Cardiac septum (tissue), 1 donor: ENCODE measurements at regions of chrX and their contacts with region 1.

Region 1: DNA sequence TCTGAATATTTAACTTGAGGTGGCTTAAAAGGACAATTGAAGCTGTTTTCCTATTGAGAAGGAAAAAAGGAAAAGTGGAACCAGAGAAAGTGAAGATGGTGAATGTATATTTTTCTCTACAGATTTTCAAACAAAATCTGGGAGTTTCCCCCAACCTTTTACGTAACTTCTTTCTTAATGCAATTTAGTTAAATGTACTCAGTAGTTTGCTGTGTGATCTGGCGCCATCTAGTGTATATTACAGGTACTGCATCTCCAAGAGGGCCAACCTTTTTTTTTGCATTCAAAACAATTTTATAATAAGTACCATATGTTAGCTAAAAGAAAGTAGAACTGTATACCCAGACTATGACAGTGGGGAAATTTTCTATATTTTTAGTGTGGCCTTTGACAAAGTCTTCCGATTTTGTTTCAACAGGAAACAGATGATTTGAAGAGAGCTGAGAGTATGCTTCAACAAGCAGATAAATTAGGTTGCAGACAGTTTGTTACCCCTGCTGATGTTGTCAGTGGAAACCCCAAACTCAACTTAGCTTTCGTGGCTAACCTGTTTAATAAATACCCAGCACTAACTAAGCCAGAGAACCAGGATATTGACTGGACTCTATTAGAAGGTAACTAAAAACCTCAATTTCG is 82.0 kb downstream of the PLS3 start:
- DNase-seq: no peak

Region 2: DNA sequence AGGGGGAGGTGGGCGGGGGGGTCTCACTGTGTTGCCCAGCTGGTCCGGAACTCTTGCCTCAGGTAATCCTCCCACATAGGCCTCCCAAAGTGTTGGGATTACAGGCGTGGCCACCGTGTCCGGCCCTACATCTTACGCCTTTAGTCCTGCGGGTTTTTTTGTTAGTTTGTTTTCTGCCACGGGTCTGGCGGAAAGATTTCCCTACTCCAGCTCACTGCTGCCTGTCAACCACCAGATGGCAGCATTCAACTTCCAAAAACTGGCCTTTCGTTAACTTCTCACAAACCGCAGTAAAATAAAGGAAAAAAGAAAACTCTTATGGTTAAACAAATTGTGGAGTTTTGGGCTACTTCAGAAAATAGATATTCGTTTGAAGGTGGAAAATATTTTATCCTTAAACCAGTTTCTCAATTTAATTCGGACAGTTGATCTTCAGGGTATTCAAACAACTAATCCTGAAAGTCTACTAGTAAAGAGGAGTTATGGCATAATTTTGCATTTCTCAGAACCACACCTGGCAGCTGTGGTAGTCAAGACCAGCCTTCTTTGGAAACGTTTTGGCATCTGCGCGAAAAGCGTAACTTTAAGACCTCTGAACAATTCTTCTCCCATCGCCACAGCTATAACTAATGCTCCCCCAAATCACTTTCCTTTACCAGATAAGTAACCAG is 312.4 kb before region 1 on chrX:
- intact Hi-C with region 1: loop called (anchors 2 kb)
- DNase-seq: no peak

Region 3: GRCh38 chrX:115602729-115603389 is 40.2 kb before region 1 on chrX:
- intact Hi-C with region 1: no loop called
- DNase-seq: no peak

Region 4: DNA sequence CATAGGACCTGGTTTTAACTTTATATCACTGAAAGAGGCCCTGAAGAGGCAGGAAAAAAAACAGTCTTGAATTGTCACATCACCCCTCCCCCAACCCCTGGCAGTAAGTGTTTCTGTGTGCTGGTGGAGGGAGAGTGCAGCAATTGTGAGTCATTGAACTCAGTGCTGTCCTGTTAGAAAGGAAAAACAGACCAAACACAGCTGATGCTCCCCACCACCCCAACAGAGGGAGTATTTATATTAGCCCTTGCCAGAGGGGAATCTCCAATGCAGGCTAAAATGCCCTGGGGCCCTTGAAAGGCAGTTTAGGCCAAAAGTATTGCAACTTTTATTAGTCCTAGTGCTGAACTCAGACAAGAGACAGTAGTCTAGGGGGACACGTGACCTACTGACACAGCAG is 329.7 kb after region 1 on chrX:
- intact Hi-C with region 1: no loop called
- DNase-seq: no peak